Heart left ventricle (tissue), 16 donors: ENCODE measurements at regions of chr5 and their contacts with region 1.

Region 1: GRCh38 chr5:101306391-101307157 is 403.5 kb upstream of the ST8SIA4 start:
- DNase-seq: no peak
- ATAC-seq: no peak
- H3K4me3 ChIP-seq: no peak overlapping the region
- H3K27ac ChIP-seq: no peak overlapping the region
- H3K4me1 ChIP-seq: no peaks in the 10 kb centered on the region
- H3K27me3 ChIP-seq: no peaks in the 10 kb centered on the region
- CTCF ChIP-seq: no peak
- POLR2A ChIP-seq: no peak

Region 2: DNA sequence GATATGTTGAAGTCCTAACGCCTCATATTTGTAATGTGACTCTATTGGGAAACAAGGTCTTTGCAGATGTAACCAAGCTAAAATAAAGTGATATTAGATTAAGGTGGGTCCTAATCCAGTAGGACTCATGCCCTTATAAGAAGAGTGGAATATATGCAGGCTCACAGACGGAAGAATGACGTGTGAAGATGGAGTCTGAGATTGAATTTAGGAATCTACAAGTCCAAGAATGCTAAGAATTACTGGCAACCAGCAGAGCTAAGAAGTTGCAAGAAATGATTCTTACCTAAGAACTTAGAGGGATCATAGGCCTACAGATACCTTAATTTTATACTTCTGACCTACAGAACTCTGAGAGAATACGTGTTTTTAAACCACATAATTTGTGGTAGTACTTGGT is 53.5 kb before region 1 on chr5:
- intact Hi-C with region 1: loop called in 1 of 10 experiments (anchors 10 kb)
- DNase-seq: no peak
- ATAC-seq: no peak
- H3K4me3 ChIP-seq: no peak overlapping the region
- H3K27ac ChIP-seq: no peak overlapping the region
- H3K4me1 ChIP-seq: no peaks in the 10 kb centered on the region
- H3K27me3 ChIP-seq: no peaks in the 10 kb centered on the region
- CTCF ChIP-seq: no peak
- POLR2A ChIP-seq: no peak